ENCODE measurements at regions of chr15 and their contacts with region 1.

Region 1: DNA sequence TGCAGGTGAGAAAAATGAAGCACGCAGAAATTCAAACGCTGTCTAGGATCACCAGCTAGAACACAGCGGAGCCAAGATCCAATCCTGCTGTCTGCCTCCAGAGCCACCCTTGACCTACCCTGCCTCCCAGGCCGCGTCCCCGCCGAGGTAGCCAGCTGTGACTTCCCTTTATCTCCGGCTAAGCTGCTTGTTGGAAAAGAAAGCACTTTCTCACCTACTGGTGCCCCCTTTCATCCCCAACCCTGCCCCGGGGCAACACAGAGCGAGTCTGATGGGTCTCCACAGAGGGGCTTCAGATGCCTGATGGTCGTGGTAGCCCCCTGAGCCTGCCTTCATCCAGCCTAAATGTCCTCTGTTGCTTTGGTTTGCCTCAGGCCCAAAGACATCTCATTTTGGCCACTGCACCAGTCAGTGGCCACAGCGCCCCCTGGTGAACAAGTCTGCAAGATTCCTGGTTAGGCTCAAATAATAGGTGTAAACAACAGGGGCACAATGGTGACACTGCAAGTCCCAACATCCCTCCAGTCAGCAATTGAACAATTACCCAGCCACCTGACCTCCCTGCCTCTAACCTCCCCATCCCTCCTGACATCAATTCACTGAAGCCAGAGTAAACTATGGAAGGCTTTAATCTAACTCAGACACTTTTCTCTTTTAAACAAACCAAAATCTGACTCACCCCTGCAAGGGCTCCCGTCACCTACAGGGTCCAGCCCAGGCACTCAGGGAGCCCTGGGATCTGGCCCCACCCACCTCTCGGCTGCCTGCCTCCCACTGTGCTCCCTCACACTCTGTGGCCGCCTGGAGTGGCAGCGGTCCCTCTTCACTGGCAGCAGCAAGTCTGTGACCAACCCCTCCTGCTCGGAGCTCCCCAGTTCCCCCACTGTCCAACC is 27.3 kb upstream of the BCL2L10 start:
- DNase-seq: peak; percentile 80
- H3K4me3 ChIP-seq: no peak overlapping the region
- H3K27ac ChIP-seq: no peak overlapping the region
- H3K4me1 ChIP-seq: peaks cover 22% of the 10 kb centered on the region
- H3K27me3 ChIP-seq: no peaks in the 10 kb centered on the region

Region 2: DNA sequence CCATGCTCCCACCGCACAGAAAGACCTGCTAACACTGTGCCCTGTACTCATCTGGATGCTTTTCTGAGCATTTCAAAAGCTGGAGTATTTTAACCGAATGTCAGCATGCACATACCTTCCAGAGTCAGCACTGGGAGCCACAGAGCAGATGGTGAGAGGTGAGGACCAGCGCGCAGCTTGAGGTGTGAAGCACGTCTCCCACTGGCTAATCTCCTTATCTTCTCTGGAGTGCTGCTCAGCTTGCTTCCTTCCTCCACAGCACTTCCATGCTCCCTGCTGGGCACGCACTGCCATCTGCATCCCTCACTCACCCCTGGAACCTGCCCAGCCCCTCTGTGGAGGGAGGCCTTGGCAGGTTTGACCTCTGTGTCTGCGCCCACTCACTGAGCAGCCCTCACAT is 51.4 kb after region 1 on chr15 and contains the start of gene GNB5:
- in situ Hi-C with region 1: loop called (anchors 10 kb)
- DNase-seq: no peak
- H3K4me3 ChIP-seq: no peak within 1 kb of the TSS
- H3K27ac ChIP-seq: no peak within 1 kb of the TSS
- H3K4me1 ChIP-seq: peaks cover 10% of the 10 kb centered on the region
- H3K27me3 ChIP-seq: no peaks in the 10 kb centered on the region
- total RNA-seq, gene GNB5: 39.1 and 42.8 TPM in 2 replicates

Measured in GM23248 (cell line).